Common myeloid progenitor, CD34-positive (primary cell): ENCODE measurements at regions of chr5 and their contacts with region 1.

Region 1: GRCh38 chr5:43040287-43041098 is at the start of gene ANXA2R:
- DNase-seq: peak; percentile 96 to 98 (median 98)
- H3K4me3 ChIP-seq: peak within 1 kb of the TSS; percentile 46 to 95 (median 80)
- H3K27ac ChIP-seq: peak within 1 kb of the TSS; percentile 99 to 100
- H3K4me1 ChIP-seq: peaks cover 9 to 72% (median 44%) of the 10 kb centered on the region in 4 experiments
- H3K27me3 ChIP-seq: no peaks in the 10 kb centered on the region

Region 2: GRCh38 chr5:42950440-42951292 is 89.8 kb before region 1 on chr5:
- CTCF ChIA-PET with region 1: interaction called, 19 read pairs
- POLR2A ChIA-PET with region 1: interaction called, 6 read pairs
- DNase-seq: peak; percentile 97 to 98 (median 98)
- H3K4me3 ChIP-seq: peak overlapping the region; percentile 56 to 84 (median 74)
- H3K27ac ChIP-seq: peak overlapping the region; percentile 89 to 97
- H3K4me1 ChIP-seq: peaks cover 8 to 42% (median 36%) of the 10 kb centered on the region in 4 experiments
- H3K27me3 ChIP-seq: peaks cover 0 to 5% (median 0%) of the 10 kb centered on the region in 5 experiments

Region 3: DNA sequence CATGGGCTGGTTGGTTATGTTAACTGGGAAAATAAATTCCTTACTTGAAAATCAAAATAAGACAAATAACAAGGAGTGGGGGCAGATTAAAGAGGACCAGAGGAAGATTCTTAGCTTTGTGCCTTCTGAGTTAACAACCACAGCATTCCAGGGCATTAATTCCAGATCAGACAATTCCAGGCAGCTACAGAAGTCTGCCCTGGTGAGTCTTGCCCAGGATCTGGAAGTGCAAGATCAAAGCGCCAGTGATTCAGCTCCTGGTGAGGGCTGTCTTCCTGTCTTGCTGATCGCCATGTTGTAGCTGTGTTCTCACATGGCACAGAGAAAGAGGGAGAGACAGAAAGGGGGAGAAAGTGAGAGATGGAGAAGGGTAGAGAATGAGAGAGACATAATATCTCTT is 66.0 kb before region 1 on chr5:
- CTCF ChIA-PET with region 1: no interaction called
- POLR2A ChIA-PET with region 1: no interaction called
- DNase-seq: no peak
- H3K4me3 ChIP-seq: no peak overlapping the region
- H3K27ac ChIP-seq: no peak overlapping the region
- H3K4me1 ChIP-seq: no peaks in the 10 kb centered on the region
- H3K27me3 ChIP-seq: no peaks in the 10 kb centered on the region

Region 4: GRCh38 chr5:42994246-42995151 is 46.0 kb before region 1 on chr5:
- CTCF ChIA-PET with region 1: interaction called, 31 read pairs
- POLR2A ChIA-PET with region 1: interaction called, 32 read pairs
- DNase-seq: peak; percentile 90 to 96 (median 95)
- H3K4me3 ChIP-seq: peak overlapping the region; percentile 67 to 98 (median 91)
- H3K27ac ChIP-seq: peak overlapping the region; percentile 97 to 98
- H3K4me1 ChIP-seq: peaks cover 12 to 46% (median 35%) of the 10 kb centered on the region in 4 experiments
- H3K27me3 ChIP-seq: no peaks in the 10 kb centered on the region

Region 5: GRCh38 chr5:43008369-43009153 is 31.9 kb before region 1 on chr5:
- CTCF ChIA-PET with region 1: interaction called, 47 read pairs
- POLR2A ChIA-PET with region 1: interaction called, 29 read pairs
- DNase-seq: peak; percentile 98 to 99 (median 99)
- H3K4me3 ChIP-seq: peak overlapping the region; percentile 32 to 95 (median 82)
- H3K27ac ChIP-seq: peak overlapping the region; percentile 89 to 91
- H3K4me1 ChIP-seq: peaks cover 12 to 44% (median 31%) of the 10 kb centered on the region in 4 experiments
- H3K27me3 ChIP-seq: no peaks in the 10 kb centered on the region

Region 6: DNA sequence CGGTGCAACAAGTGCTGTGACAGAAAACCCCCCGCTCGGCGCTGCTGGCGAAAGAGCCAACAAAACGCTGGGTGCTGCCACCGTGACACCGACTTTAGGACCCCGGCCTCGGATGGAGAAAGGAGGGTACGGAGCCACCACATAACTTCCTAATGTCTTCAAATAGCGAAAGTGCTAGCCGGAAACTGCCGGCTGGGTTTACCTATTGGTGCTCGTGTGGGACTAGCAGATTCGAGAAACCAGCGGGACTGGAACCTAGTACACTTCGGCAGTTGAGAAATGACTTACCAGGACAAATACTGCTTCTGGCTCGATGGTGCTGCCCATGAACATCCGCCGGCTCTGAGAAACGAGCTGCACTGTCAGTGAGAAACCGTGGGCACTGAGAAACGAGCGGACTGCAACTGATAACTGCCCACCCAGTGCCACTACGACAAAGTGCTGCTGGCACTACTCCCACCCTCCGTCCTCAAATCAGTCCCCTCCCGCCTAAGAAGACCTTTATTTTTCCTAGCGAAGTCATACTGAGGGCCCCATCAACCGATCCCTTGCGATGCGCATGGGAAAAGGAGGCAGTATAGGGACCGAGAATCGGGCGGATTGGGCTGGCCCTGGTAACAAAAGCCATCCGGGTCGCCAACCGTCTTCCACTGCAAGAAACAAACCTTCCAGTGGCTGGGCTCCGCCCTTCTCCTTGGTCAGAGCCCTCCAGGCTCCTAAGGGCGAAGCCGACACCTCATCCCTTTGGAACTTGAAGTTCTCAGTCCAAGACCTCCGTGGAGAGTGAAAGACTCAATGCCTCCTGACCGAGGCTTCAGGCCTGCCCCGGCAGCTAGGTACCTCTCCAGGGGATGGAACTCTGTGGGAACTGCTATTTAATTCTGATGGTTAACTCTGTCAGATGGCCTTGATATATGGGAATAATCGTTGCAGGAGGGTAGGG is 26.6 kb after region 1 on chr5:
- CTCF ChIA-PET with region 1: interaction called, 22 read pairs
- POLR2A ChIA-PET with region 1: interaction called, 45 read pairs
- DNase-seq: peak; percentile 94 to 97 (median 95)
- H3K4me3 ChIP-seq: peak overlapping the region; percentile 85 to 99 (median 94)
- H3K27ac ChIP-seq: peak overlapping the region; percentile 98 to 99
- H3K4me1 ChIP-seq: peaks cover 12 to 41% (median 32%) of the 10 kb centered on the region in 4 experiments
- H3K27me3 ChIP-seq: no peaks in the 10 kb centered on the region

Region 7: DNA sequence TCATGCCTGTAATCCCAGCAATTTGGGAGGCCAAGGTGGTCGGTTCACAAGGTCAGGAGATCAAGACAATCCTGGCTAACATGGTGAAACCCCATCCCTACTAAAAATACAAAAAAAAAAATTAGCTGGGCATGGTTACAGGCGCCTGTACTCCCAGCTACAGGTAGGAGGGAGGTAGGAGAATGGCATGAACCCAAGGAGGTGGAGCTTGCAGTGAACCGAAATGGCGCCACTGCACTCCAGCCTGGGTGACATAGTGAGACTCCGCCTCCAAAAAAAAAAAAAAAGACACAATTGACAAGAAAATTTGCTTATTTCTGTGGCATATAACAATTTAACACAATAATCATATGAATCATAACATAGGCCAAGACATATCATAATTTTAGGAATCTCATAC is 45.0 kb after region 1 on chr5:
- CTCF ChIA-PET with region 1: no interaction called
- POLR2A ChIA-PET with region 1: no interaction called
- DNase-seq: no peak
- H3K4me3 ChIP-seq: no peak overlapping the region
- H3K27ac ChIP-seq: no peak overlapping the region
- H3K4me1 ChIP-seq: no peaks in the 10 kb centered on the region
- H3K27me3 ChIP-seq: no peaks in the 10 kb centered on the region